ENCODE measurements at regions of chr10 and their contacts with region 1.

Region 1: DNA sequence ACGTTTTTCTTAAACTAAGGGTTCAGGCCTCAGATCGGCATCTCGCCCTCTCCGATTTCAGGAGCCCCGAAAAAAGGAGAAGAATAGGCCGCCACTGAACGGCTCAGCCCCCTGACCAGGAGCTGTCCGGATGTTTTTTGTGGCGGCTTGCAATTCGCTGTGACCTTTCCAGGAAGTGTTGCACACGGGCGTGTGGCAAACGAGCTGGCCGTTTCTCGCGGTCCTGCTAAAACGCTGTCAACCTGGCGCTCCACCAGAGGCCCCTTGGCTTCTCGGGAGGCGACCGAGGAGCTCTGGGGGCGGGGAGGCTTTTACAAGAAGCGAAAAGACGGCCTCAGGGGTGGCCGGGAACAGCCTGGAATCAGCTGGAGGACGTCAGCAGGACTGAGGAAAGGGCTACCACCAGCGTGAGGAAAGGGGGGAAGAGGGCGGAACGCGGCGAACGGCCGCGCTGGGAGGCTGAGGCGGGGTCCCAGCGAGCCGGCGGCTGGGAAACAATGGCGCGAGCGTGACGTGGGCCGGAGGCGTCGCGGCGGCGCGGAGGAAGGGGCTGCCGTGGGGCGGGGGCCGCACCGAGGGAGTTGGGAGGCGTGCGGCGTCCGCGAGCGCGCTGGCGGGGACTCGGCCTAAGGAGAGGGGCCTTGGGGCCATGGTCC is 493 bp downstream of the NT5C2 start:
- DNase-seq: peak; percentile 81
- ATAC-seq: peak; percentile 50
- H3K4me3 Mint-ChIP-seq: peak overlapping the region; percentile 95
- H3K27ac Mint-ChIP-seq: peak overlapping the region; percentile 99
- H3K4me1 Mint-ChIP-seq: peaks cover 44% of the 10 kb centered on the region
- H3K27me3 Mint-ChIP-seq: no peaks in the 10 kb centered on the region

Region 2: GRCh38 chr10:102945449-102946361 is 246.9 kb before region 1 on chr10:
- CTCF ChIA-PET with region 1: no interaction called
- POLR2A ChIA-PET with region 1: no interaction called
- intact Hi-C with region 1: no loop called
- DNase-seq: no peak
- ATAC-seq: no peak
- H3K4me3 Mint-ChIP-seq: no peak overlapping the region
- H3K27ac Mint-ChIP-seq: no peak overlapping the region
- H3K4me1 Mint-ChIP-seq: no peaks in the 10 kb centered on the region
- H3K27me3 Mint-ChIP-seq: no peaks in the 10 kb centered on the region

Region 3: DNA sequence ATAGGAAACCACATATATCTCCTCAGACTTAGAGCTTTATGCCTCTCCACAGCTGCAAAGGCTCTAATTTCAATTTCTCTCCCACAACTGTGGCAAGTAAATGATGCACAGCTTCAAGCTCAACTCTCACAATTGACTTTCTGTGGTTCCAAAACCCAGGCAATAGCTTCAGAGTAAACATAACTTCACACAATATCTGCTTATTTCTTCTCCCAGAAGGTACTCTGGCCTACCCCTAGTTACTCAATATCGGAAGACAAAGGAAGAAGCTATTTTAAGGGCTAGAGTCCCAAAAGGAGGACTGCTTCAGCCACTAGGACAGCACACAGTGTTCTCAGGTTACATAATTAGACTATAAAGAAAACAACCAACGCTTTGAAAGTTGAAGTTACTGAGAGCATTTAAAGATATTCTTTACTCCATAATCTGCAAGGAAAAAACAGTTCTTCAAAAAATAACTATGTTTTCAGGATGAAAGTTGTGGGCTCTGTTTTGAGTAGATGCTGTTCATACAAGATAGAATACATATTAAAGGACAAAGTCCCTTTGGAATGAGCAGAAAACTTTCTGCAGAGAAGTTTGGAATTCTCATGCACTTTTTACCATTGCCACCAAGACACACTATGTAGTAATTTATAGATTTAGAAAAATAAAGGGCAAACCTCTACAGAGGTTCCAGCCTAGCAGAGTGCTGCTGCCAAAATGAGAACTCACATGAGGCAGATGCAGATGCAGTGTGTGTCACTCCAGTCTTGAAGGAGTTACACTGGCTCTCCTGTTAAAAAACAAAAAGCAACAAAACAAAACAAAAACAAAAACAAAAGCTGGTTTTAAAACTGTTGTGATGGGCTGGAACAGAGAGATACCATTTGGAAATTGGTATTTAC is 81.3 kb before region 1 on chr10:
- CTCF ChIA-PET with region 1: interaction called, 3 read pairs
- POLR2A ChIA-PET with region 1: interaction called, 4 read pairs
- intact Hi-C with region 1: loop called in 1 of 2 experiments (anchors 5 kb)
- DNase-seq: no peak
- ATAC-seq: no peak
- H3K4me3 Mint-ChIP-seq: no peak overlapping the region
- H3K27ac Mint-ChIP-seq: peak overlapping the region; percentile 83
- H3K4me1 Mint-ChIP-seq: peaks cover 20% of the 10 kb centered on the region
- H3K27me3 Mint-ChIP-seq: no peaks in the 10 kb centered on the region

Region 4: DNA sequence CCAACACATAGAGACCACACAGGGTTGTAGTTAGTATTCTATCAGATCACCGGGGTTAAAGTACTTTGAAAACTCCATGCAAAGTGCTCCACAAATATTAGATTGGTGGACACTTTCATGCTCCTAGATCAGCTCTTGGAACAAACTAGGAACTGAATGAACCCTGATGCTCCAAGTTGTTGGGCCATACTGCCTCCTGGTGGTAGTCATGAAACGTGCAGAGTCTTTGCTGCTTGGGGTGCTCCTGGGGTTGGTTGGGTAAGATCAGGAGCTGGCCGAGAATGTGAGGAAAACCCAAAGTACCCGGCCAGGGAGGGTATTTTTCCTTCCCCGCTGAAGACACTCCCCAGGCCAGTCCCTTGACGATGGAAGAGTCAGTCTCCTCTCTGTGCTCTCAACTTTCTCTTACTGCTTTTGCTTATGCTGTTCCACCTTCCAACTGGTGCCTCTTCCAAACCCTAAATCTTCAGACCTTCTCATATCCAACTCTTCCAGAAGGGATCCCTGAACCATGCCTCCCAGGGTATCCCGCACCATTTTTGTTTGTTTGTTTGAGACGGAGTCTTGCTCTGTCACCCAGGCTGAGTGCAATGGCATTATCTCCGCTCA is 52.2 kb after region 1 on chr10:
- CTCF ChIA-PET with region 1: interaction called, 8 read pairs
- POLR2A ChIA-PET with region 1: no interaction called
- intact Hi-C with region 1: loop called in 1 of 2 experiments (anchors 2 kb)
- DNase-seq: peak; percentile 80
- ATAC-seq: peak; percentile 81
- H3K4me3 Mint-ChIP-seq: no peak overlapping the region
- H3K27ac Mint-ChIP-seq: no peak overlapping the region
- H3K4me1 Mint-ChIP-seq: peaks cover 12% of the 10 kb centered on the region
- H3K27me3 Mint-ChIP-seq: peaks cover 2% of the 10 kb centered on the region

Region 5: DNA sequence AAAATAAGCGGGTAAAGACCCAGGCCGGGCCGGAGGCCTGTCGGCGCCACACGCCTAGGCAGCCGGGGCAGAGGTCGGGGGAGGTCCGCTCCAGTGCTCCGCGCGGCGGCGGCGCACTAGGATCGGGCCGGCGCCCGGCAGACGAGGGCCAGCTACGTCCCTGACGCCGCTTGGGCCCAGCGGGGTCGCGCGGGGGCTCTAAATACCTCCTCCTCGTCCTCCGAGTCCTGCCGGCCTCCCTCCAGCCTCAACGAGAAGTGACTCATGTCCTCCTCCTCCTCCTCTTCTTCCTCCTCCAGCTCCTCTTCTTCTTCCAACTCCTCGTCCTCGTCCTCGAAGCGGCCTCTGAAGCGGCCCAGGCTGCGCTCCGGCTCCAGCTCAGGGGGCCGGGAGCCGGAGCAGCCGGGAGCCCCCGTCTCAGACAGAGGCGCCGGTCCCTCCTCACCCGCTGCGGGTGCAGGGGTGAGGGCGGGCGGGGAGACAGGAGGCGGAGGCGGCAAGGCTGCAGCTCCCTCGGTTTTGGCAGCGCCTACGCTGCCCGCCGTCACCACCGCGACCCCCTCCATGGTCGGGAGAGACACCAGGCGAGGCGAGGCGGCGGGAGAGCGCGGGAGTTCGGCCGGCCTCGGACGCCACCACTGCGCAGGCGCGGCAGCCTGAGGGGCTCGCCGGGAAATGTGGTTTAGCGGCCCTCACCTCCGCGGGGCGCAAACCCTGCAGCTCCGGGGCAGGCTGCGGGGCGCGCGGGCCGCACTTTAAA is 158.1 kb after region 1 on chr10 and contains the start of gene PCGF6:
- CTCF ChIA-PET with region 1: no interaction called
- POLR2A ChIA-PET with region 1: interaction called, 3 read pairs
- intact Hi-C with region 1: loop called in 1 of 2 experiments (anchors 2 kb)
- DNase-seq: peak; percentile 83
- ATAC-seq: peak; percentile 86
- H3K4me3 Mint-ChIP-seq: peak within 1 kb of the TSS; percentile 86
- H3K27ac Mint-ChIP-seq: peak within 1 kb of the TSS; percentile 84
- H3K4me1 Mint-ChIP-seq: peaks cover 9% of the 10 kb centered on the region
- H3K27me3 Mint-ChIP-seq: no peaks in the 10 kb centered on the region
- total RNA-seq, gene PCGF6: 10.4 to 14.8 TPM

Region 6: DNA sequence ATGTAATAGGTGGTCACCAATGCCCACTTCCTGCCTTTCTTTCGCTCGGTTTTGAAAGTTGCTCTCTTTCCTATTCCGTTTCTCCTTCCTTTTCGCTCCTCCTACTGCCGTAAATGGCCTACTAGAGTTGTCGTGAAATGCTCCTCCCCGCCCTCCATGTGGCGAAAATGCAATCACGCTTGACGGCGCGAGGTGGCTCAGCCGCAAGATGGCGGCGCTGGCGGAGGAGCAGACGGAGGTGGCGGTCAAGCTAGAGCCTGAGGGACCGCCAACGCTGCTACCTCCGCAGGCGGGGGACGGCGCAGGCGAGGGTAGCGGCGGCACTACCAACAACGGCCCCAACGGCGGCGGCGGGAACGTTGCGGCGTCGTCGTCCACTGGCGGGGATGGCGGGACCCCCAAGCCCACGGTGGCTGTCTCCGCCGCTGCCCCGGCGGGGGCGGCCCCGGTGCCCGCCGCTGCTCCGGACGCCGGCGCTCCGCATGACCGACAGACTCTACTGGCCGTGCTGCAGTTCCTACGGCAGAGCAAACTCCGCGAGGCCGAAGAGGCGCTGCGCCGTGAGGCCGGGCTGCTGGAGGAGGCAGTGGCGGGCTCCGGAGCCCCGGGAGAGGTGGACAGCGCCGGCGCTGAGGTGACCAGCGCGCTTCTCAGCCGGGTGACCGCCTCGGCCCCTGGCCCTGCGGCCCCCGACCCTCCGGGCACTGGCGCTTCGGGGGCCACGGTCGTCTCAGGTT is 175.4 kb after region 1 on chr10 and contains the start of gene TAF5:
- CTCF ChIA-PET with region 1: no interaction called
- POLR2A ChIA-PET with region 1: no interaction called
- intact Hi-C with region 1: loop called in 1 of 2 experiments (anchors 1 kb)
- DNase-seq: peak; percentile 95
- ATAC-seq: peak; percentile 61
- H3K4me3 Mint-ChIP-seq: peak within 1 kb of the TSS; percentile 81
- H3K27ac Mint-ChIP-seq: peak within 1 kb of the TSS; percentile 85
- H3K4me1 Mint-ChIP-seq: peaks cover 16% of the 10 kb centered on the region
- H3K27me3 Mint-ChIP-seq: no peaks in the 10 kb centered on the region
- total RNA-seq, gene TAF5: 11.2 to 11.4 TPM

Measured in activated CD4-positive, alpha-beta T cell treated with anti-CD3 and anti-CD28 coated beads for 36 hours (primary cell).